Panc1 (cell line): ENCODE measurements at regions of chr7 and their contacts with region 1.

Region 1: DNA sequence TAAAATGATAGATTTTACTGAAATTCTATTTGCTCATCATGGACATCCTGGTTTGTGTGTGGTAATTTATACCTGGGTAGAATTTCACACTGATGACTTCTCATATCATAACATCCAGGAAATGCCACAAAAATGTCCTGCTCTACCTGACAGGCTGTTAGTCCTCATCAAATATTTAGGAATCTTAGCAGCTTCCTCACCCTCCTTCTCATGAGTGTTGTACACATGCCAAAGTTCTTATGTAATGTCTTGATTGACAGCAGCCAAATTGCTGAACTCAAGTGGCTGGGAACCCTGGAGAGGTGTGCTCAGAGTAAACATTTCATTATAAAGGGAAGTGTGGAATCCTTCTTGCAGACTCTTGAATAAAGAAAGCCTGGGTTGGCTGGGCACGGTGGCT is 8.9 kb downstream of the EEPD1 start:
- DNase-seq: no peak
- ATAC-seq: no peak
- H3K4me3 ChIP-seq: no peak overlapping the region
- H3K27ac ChIP-seq: no peak overlapping the region
- H3K4me1 ChIP-seq: peaks cover 74% of the 10 kb centered on the region
- H3K27me3 ChIP-seq: no peaks in the 10 kb centered on the region
- CTCF ChIP-seq: no peak

Region 2: GRCh38 chr7:36175886-36176285 is 13.9 kb after region 1 on chr7:
- CTCF ChIA-PET with region 1: no interaction called
- POLR2A ChIA-PET with region 1: interaction called, 11 read pairs
- in situ Hi-C with region 1: no loop called
- intact Hi-C with region 1: no loop called
- DNase-seq: no peak
- ATAC-seq: peak; percentile 51; the same call in 1 of the 2 replicates
- H3K4me3 ChIP-seq: no peak overlapping the region
- H3K27ac ChIP-seq: no peak overlapping the region
- H3K4me1 ChIP-seq: peaks cover 11% of the 10 kb centered on the region; the same call in 1 of the 2 replicates
- H3K27me3 ChIP-seq: no peaks in the 10 kb centered on the region
- CTCF ChIP-seq: no peak

Region 3: DNA sequence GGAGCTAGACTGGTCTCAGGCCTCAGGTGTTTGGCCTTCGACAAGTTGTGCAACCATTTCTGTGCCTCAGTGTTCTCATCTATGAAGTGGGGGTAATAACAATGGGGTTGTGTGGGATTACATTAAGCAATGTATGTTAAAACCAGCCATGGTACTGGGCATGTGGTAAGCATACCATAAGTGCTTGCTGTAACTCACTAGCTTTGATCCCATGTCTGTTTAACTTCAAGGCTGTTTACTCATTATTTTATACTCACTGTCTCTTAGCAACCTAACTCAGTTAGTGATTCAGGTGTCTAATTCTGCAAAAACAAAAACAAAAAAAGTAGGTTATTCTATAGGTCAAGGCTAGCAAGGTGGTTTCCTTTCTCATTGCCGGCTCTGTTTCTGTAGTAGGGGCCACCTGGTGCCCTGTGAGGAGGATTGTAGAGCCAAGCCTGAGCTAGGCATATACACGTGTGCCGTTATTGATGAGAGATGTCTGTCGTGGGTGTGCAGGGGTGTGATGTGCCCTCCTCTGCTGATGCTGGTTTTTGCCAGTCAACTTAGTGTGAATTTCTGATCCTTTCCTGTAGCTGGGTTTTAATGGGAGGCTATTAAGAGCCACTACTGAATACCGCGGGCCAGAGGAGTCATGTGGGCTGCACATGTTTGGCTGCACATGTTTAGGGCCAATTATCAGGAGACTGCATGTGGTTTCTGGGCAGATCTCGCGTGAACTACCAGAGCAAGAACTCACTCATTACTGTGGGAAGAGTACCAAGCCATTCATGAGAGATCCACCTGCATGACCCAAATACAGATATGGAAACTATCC is 47.2 kb after region 1 on chr7:
- CTCF ChIA-PET with region 1: interaction called, 12 read pairs
- POLR2A ChIA-PET with region 1: no interaction called
- in situ Hi-C with region 1: no loop called
- intact Hi-C with region 1: no loop called
- DNase-seq: no peak
- ATAC-seq: no peak
- H3K4me3 ChIP-seq: no peak overlapping the region
- H3K27ac ChIP-seq: peak overlapping the region; percentile 78
- H3K4me1 ChIP-seq: peaks cover 58% of the 10 kb centered on the region
- H3K27me3 ChIP-seq: no peaks in the 10 kb centered on the region
- CTCF ChIP-seq: no peak

Region 4: DNA sequence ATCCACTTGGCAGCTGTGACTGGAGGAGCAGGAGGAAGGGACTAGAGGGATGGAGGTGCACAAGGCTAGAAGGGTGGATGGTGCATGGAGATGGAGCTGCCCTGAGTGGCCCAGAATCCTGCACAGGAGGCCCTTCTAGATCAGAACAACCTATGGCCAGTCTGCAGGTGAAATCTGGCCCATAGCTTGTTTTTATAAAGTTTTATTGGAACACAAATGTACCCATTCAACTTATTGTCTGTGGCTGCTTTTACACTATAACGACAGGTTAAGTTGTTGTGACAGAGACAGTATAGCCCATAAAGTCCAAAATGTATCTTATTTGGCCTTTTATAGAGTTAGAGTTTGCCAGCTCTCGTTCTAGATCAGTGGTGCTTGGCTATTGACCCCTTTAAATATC is 88.3 kb after region 1 on chr7:
- CTCF ChIA-PET with region 1: interaction called, 8 read pairs
- POLR2A ChIA-PET with region 1: no interaction called
- in situ Hi-C with region 1: loop called (anchors 5 kb)
- intact Hi-C with region 1: no loop called
- DNase-seq: no peak
- ATAC-seq: 0 out of 2 replicates have a peak, but pooled peaks have one; percentile 14
- H3K4me3 ChIP-seq: no peak overlapping the region
- H3K27ac ChIP-seq: no peak overlapping the region
- H3K4me1 ChIP-seq: peaks cover 6% of the 10 kb centered on the region; the same call in 1 of the 2 replicates
- H3K27me3 ChIP-seq: no peaks in the 10 kb centered on the region
- CTCF ChIP-seq: no peak

Region 5: GRCh38 chr7:36315309-36316133 is 153.5 kb after region 1 on chr7:
- CTCF ChIA-PET with region 1: no interaction called
- POLR2A ChIA-PET with region 1: no interaction called
- in situ Hi-C with region 1: no loop called
- intact Hi-C with region 1: no loop called
- DNase-seq: no peak
- ATAC-seq: no peak
- H3K4me3 ChIP-seq: no peak overlapping the region
- H3K27ac ChIP-seq: no peak overlapping the region
- H3K4me1 ChIP-seq: peaks cover 7% of the 10 kb centered on the region
- H3K27me3 ChIP-seq: no peaks in the 10 kb centered on the region
- CTCF ChIP-seq: no peak